Activated CD4-positive, alpha-beta T cell treated with anti-CD3 and anti-CD28 coated beads, Interleukin-2, amount 10 ng/mL, durations not matched to agents 7 days and 5 days (primary cell): ENCODE measurements at regions of chr14 and their contacts with region 1.

Region 1: GRCh38 chr14:103528587-103529382 is at the start of gene TRMT61A:
- DNase-seq: peak; percentile 76
- H3K4me3 Mint-ChIP-seq: peak within 1 kb of the TSS; percentile 95
- H3K27ac Mint-ChIP-seq: peak within 1 kb of the TSS; percentile 98
- H3K4me1 Mint-ChIP-seq: peaks cover 40% of the 10 kb centered on the region
- H3K27me3 Mint-ChIP-seq: peaks cover 10% of the 10 kb centered on the region
- total RNA-seq, gene TRMT61A: 7.0 to 8.8 TPM

Region 2: DNA sequence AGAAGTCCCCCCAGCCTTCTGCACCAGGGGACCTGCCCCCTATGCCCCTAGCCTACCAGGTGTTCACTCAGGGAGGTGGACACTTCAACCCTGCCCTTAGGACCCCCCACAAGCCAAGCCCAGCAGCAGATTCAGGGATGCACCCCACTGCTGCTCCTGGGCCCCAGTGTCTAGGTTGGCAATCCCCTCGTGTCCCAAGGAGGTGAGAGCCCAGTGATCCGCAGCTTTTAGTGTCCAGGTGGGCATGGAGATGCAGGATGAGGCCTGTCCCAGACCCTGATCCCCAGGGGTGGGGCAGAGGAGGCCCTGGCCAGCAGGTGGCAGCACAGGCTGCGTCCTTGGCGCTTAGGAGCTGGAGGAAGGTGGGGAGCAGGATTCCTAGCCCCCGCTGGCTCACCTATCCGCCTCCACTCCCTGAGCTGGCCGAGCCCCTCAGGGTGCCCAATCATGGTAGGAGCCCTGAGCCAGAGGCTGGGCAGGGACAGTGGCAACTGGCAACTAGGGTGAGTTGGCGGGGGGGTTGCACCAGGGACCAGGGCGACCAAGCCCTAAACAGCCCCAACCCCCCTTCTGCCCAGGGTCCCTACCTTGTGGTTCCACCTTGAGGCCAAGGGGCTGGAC is 10.3 kb before region 1 on chr14:
- CTCF ChIA-PET with region 1: interaction called, 12 read pairs
- POLR2A ChIA-PET with region 1: no interaction called
- DNase-seq: peak; percentile 64
- H3K4me3 Mint-ChIP-seq: no peak overlapping the region
- H3K27ac Mint-ChIP-seq: no peak overlapping the region
- H3K4me1 Mint-ChIP-seq: peaks cover 12% of the 10 kb centered on the region
- H3K27me3 Mint-ChIP-seq: peaks cover 10% of the 10 kb centered on the region